ENCODE measurements at regions of chr19 and their contacts with region 1.

Region 1: GRCh38 chr19:54029930-54030490 is 33.7 kb downstream of the VSTM1 start:
- DNase-seq: peak; percentile 84

Region 2: DNA sequence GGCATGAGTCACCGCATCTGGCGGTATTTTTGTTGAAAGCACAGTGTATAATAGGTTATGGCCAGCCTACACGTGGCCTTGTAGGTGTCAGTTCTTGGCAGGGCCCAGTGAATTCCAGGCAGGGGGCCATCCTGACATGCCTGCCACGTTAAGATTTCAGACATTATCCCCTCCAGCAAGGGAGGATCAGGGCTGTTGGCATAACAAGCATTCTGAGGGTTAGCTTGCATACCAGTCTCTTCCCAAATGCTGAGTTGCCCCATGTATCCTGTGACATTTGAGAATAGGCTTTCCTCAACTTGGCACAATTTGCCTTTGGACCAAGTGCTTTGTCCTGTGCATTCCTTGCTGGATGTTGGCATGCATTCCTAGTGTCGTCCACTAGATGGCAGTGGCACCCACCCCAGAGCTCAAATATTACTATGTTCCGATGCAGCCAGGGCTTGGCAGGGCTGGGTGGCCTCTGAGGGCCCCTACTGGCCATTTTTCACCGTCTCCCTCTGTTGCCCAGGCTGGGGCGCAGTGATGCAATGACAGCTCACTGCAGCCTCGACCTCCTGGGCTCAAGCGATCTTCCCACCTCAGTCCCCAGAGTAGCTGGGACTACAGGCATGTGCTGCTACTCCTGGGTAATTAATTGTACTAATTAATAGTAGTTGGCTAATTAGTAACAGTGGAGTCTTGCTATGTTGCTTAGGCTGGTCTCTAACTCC is 237.1 kb before region 1 on chr19:
- intact Hi-C with region 1: loop called in 1 of 2 experiments (anchors 10 kb)
- DNase-seq: peak; percentile 96

Region 3: GRCh38 chr19:53844849-53845246 is 185.2 kb before region 1 on chr19:
- intact Hi-C with region 1: loop called in 1 of 2 experiments (anchors 2 kb)
- DNase-seq: no peak

Region 4: DNA sequence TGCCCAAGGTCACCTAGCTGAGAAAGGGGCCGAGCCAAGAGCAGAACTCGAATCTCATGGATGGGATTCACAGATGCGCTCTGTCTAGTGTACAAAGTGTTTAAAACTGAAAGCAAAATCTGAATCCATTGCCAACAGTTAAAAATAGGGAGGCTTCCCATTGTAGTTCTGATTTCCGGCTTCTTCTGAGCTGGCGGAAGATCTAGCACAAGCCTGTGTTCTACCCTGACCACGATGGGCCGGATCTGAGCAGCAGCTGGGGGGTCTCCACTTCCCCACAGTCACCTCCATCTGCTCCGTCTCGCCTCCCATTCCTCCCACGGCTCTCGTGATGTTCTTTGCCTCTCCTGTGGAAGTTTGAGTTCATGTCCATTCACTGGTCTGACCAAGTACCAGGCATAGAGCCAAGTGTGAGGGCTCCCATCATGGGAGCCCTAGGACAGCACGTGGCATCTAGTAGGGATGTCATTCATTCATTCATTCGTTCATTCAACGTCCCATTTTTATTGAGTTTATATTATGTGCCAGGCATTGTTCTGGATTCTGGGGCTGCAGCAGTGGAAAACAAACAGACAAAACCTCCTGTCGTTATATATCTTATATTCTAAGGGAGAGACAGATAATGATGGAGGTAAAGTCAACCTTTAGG is 64.8 kb before region 1 on chr19:
- intact Hi-C with region 1: loop called in 1 of 2 experiments (anchors 5 kb)
- DNase-seq: no peak

Measured in posterior vena cava (tissue), 2 donors.